ENCODE measurements at regions of chr20 and their contacts with region 1.

Region 1: DNA sequence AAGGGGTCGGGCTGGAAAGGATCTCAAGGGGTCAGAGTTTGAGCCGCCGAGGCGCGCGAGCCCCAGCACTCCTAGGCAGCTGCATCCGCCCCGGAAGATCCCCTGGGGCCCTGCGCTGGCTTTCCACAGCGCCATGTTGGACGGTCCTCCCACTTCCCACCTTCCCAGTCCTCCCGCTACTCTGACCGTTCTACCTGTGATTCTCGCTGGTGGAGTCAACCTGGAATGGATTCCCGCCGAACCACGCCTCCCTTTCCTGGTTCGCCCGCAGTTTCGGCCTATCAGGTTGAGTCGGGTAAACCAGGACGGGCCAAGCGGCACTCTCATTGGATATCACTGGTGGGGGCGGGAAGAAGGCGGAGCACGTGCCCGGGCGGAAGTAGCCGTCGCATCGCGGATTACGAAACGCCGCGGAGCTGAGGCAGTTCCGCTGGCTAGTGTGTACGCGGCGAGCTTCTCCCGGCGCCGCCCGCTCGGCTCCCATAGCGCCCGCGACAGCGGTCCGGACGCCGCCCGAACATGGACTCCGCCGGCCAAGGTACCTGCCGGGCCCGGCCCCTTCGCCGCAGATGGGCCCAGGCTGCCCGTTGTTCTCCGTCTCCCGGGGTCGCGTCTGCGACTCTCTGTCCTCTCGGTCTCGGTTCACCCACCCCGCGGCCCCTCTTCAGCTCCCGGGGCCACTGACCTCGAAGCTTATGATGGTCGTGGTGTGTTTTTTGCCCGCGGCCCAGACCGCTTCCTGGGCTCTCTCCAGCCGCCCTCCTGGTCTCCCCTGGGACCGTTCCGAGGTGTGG is at the start of gene TPD52L2:
- DNase-seq: peak; percentile 100
- H3K27ac ChIP-seq: peak within 1 kb of the TSS; percentile 96
- CTCF ChIP-seq: no peak

Region 2: GRCh38 chr20:63612276-63612928 is 252.6 kb before region 1 on chr20:
- CTCF ChIA-PET with region 1: no interaction called
- POLR2A ChIA-PET with region 1: no interaction called
- DNase-seq: no peak
- H3K27ac ChIP-seq: peak overlapping the region; percentile 41
- CTCF ChIP-seq: no peak

Region 3: DNA sequence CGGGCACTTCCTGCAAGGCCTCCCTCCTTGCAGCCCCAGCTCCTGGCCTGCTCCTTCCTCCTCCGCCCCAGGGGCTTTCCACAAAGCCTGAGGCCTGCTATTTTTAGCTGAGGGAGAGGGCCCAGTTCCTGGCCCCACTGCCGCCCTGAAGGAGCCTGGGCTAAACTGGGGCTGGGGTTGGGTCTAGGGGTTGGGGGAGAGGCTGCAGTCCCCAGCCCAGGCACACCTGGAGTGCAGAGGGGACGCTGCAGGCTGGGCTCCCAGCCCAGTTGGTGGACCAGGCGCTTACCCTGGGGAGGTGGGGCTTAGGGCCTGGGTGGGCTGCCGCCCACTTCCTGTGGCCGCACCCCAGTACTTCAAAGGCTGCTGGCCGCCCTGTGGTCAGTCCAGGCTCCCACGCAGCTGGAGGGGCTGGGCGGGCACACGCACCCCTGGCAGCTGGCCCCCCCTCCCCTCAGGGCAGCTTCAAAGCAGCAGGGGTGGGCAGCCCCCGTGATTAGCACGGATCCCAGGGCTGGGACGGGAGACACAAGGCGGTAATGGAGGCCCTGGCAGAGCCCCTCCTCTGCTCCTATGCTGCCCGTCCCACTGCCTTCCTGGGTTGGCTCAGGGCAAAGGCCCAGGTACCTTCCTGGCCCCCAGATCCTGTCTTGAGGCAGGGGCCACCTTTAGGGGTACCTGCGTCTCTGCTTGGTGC is 10.8 kb before region 1 on chr20:
- CTCF ChIA-PET with region 1: interaction called, 11 read pairs
- POLR2A ChIA-PET with region 1: interaction called, 3 read pairs
- DNase-seq: no peak
- H3K27ac ChIP-seq: no peak overlapping the region
- CTCF ChIP-seq: no peak

Region 4: GRCh38 chr20:63911176-63911575 is 46.1 kb after region 1 on chr20:
- CTCF ChIA-PET with region 1: no interaction called
- POLR2A ChIA-PET with region 1: interaction called, 10 read pairs
- DNase-seq: peak; percentile 97
- H3K27ac ChIP-seq: peak overlapping the region; percentile 88
- CTCF ChIP-seq: no peak

Region 5: DNA sequence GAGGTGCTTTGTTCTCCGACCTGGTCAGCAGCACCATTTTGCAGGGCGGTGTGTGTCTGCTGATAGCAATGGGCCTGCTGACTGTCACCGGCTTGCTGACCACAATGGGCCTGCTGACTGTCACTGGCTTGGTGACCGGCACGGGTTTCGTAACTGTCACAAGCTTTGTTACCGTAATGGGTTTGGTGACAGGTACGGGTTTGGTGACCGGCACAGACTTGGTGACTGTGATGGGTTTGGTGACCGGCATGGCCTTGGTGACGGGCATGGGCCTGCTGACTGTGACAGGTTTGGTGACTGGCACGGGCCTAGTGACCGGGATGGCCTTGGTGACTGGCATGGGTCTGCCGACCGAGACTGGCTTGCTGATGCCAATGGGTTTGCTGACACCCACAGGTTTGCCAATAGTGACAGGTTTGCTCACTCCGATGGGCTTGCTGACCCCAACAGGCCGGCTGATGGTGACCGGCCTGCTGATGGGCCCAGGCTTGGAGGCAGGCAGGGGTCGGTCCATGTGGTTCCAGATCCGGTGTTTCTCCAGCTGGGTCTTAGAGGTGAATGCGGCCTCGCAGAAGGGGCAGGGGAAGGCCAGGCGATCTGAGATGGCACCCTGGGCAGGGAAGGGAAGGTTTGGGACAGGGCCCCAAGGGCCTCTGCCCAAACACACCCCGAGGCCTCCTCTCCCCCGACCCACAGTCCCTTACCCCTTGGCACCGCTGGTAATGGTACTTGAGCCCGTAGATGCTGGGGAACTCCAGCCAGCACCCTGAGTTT is 101.3 kb after region 1 on chr20:
- CTCF ChIA-PET with region 1: no interaction called
- POLR2A ChIA-PET with region 1: no interaction called
- DNase-seq: no peak
- H3K27ac ChIP-seq: peak overlapping the region; percentile 3; the same call in 1 of the 2 replicates
- CTCF ChIP-seq: no peak